Left cardiac atrium (tissue), 4 donors: ENCODE measurements at regions of chr20 and their contacts with region 1.

Region 1: DNA sequence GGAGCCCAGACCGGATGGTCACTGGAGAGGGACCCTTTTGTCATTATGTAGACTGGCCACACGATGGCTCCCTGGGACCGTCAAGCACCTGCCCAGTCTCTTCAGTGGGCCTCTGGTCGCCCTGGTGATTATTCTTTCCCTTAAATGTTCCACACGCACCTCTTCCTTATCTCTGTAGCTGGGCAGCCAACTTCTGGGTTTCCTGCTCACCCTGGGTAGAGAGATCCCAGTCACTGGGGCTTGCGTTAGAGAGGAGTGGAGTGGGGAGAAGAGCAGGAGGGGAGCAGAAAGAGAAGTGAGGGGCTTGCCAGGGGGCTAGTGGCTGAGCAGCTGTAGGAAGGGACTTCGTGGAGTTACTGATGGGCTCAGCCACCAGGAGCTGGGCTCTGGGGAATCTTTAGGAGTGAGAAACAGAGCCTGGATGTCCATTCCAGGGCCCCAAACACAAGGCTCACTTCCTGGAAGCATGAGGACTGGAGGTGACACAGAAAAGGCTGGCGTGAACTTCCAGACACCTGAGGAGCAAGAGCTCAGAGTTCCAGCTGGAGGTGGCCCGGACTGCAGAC is 150.1 kb downstream of the DHX35 start:
- DNase-seq: peak; percentile 51
- ATAC-seq: peak; percentile 87 to 91

Region 2: GRCh38 chr20:39010496-39010895 is 101.8 kb before region 1 on chr20:
- intact Hi-C with region 1: no loop called
- DNase-seq: no peak
- ATAC-seq: no peak

Region 3: GRCh38 chr20:39133201-39133600 is 20.9 kb after region 1 on chr20:
- intact Hi-C with region 1: no loop called
- DNase-seq: no peak
- ATAC-seq: no peak

Region 4: DNA sequence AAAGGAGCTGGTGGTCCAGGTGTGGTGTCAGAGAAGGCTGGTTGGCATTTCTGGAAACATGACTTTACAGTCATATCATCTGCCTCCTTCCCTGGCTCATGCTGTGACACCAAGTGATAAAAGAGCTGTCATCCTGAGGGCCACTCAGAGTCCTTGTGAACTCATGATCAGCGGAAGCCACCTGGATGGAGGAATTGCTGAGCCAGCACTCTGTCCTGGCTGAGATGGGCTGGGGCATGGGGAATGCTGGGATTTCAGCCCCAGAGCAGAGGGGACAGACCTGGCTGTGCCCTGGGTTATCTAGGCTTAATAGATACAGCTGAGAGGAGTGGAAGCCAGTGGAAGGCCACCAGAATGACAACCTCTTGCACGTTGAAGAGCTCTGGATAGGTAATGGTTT is 64.2 kb after region 1 on chr20:
- intact Hi-C with region 1: no loop called
- DNase-seq: no peak
- ATAC-seq: no peak

Region 5: DNA sequence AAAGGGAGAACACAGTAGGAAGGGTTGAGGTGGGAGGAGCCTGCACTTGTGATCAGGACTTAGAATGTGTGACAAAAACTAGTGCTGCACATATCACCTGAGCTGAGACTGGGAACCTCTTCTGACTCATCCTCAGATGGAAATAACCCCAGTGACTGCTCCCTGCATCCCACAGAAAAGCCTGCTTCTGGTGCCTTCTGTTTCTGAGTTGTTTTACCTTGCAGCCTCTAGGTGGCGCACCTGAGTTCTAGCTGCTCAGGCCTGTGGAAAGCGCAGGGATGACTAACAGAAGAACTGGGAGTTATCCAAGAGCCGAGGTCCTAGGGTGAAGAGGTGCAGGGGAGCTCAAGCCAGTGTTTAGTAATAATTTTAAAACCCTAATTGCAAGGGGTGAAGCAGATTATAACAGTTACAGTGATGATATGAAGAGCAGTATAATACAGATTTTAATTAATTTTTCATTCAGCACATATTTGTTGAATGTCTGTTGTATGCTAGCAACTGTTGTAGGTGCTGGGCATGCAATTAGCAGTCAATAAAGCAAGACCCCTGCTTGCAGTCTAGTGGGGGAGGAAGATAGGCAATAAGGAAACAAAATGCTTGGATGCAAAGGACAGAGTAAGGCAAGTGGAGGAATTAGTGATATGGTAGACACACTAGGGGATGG is 152.4 kb after region 1 on chr20:
- intact Hi-C with region 1: loop called in 1 of 2 experiments (anchors 10 kb)
- DNase-seq: peak; percentile 69
- ATAC-seq: peak; percentile 69 to 78

Region 6: GRCh38 chr20:39874049-39874888 is 762.0 kb after region 1 on chr20:
- intact Hi-C with region 1: loop called in 1 of 2 experiments (anchors 10 kb)
- DNase-seq: peak; percentile 85
- ATAC-seq: peak; percentile 93 to 96